ENCODE measurements at regions of chr11 and their contacts with region 1.

Region 1: GRCh38 chr11:8311366-8311765 is 47.7 kb upstream of the LMO1 start:
- DNase-seq: no peak
- ATAC-seq: no peak
- H3K4me3 ChIP-seq: no peak overlapping the region
- H3K27ac ChIP-seq: no peak overlapping the region
- H3K4me1 ChIP-seq: no peaks in the 10 kb centered on the region
- H3K27me3 ChIP-seq: peaks cover 20% of the 10 kb centered on the region
- CTCF ChIP-seq: no peak

Region 2: GRCh38 chr11:6693342-6694228 is 1617.8 kb before region 1 on chr11:
- CTCF ChIA-PET with region 1: no interaction called
- POLR2A ChIA-PET with region 1: no interaction called
- intact Hi-C with region 1: no loop called
- DNase-seq: peak; percentile 72
- ATAC-seq: peak; percentile 78
- H3K4me3 ChIP-seq: no peak overlapping the region
- H3K27ac ChIP-seq: peak overlapping the region; percentile 64
- H3K4me1 ChIP-seq: peaks cover 15% of the 10 kb centered on the region
- H3K27me3 ChIP-seq: no peaks in the 10 kb centered on the region
- CTCF ChIP-seq: no peak

Region 3: GRCh38 chr11:8225589-8226036 is 85.8 kb before region 1 on chr11:
- CTCF ChIA-PET with region 1: no interaction called
- POLR2A ChIA-PET with region 1: no interaction called
- intact Hi-C with region 1: no loop called
- DNase-seq: peak; percentile 70
- ATAC-seq: peak; percentile 57
- H3K4me3 ChIP-seq: no peak overlapping the region
- H3K27ac ChIP-seq: no peak overlapping the region
- H3K4me1 ChIP-seq: peaks cover 32% of the 10 kb centered on the region
- H3K27me3 ChIP-seq: peaks cover 8% of the 10 kb centered on the region; the same call in 1 of the 2 replicates
- CTCF ChIP-seq: peak; percentile 93

Region 4: DNA sequence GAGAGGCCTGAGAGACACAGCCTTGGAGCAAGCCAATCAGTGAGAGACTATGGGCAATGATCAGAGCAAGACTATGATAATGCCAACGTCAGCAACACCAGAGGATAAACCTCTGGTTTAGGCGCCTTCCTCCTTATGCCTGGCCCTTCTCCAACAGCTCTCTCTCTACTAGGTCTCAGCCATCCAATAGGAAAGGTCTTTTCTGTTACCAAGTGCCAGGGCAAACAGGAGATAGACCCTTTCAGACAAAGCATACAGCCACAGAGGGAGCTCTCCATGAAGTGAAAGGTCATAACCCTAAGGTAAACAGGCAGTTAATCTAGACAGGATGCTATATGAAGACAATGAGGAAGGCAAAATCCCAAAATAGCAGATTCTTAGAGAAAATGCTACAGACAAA is 273.1 kb after region 1 on chr11:
- CTCF ChIA-PET with region 1: no interaction called
- POLR2A ChIA-PET with region 1: interaction called, 12 read pairs
- intact Hi-C with region 1: no loop called
- DNase-seq: no peak
- ATAC-seq: no peak
- H3K4me3 ChIP-seq: no peak overlapping the region
- H3K27ac ChIP-seq: no peak overlapping the region
- H3K4me1 ChIP-seq: no peaks in the 10 kb centered on the region
- H3K27me3 ChIP-seq: no peaks in the 10 kb centered on the region
- CTCF ChIP-seq: no peak